Heart right ventricle (tissue), 16 donors: ENCODE measurements at regions of chr14 and their contacts with region 1.

Region 1: DNA sequence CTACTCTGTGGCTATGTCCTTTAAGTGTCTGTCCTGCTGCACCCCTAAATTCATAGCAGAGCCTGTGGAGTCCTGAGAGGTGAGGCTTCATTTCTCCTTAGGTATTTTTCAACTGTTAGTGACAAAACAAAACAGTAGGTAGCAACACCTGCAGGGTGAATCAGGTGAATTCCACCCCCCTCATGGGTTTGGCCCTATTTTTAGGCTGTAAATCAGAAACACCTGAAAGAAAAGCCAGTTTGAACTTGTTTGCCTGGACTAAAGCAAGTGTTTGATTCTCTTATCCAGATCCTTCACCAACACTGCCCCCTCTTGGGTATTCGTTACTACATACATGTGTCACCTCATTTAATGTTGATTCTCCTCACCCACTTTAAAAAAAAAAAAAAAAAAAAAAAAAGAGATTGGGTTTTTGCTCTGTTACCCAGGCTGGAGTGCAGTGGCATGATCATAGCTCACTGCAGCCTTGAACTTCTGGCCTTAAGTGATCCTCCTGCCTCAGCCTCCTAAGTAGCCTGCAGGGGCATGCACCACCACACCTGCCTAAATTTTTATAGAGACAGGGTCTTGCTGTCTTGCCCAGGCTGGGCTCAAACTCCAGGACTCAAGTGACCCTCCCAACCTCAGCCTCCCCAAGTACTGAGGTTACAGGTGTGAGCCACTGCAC is 10.3 kb downstream of the TBPL2 start:
- DNase-seq: peak in 1 of 2 donors; percentile 51
- ATAC-seq: peak in 7 of 8 donors; percentile 46 to 86 (median 75)
- H3K4me3 ChIP-seq: no peak overlapping the region
- H3K27ac ChIP-seq: no peak overlapping the region
- H3K4me1 ChIP-seq: peaks cover 0 to 5% (median 0%) of the 10 kb centered on the region in 9 donors
- H3K27me3 ChIP-seq: no peaks in the 10 kb centered on the region
- CTCF ChIP-seq: peak in 7 of 9 donors; percentile 39 to 54 (median 47)

Region 2: GRCh38 chr14:55212634-55213033 is 217.5 kb before region 1 on chr14:
- intact Hi-C with region 1: loop called in 8 of 10 experiments (anchors 2 to 10 kb)
- DNase-seq: no peak
- ATAC-seq: no peak
- H3K4me3 ChIP-seq: no peak overlapping the region
- H3K27ac ChIP-seq: no peak overlapping the region
- H3K4me1 ChIP-seq: peaks cover 0 to 6% (median 0%) of the 10 kb centered on the region in 9 donors
- H3K27me3 ChIP-seq: no peaks in the 10 kb centered on the region
- CTCF ChIP-seq: no peak

Region 3: GRCh38 chr14:55245657-55246268 is 184.4 kb before region 1 on chr14:
- intact Hi-C with region 1: loop called in 1 of 10 experiments (anchors 10 kb)
- DNase-seq: no peak
- ATAC-seq: no peak
- H3K4me3 ChIP-seq: no peak overlapping the region
- H3K27ac ChIP-seq: no peak overlapping the region
- H3K4me1 ChIP-seq: peaks cover 0 to 3% (median 0%) of the 10 kb centered on the region in 9 donors
- H3K27me3 ChIP-seq: peaks cover 0 to 12% (median 3%) of the 10 kb centered on the region in 7 donors
- CTCF ChIP-seq: peak; percentile 22 to 69 (median 56)

Region 4: GRCh38 chr14:55265197-55265596 is 165.0 kb before region 1 on chr14:
- intact Hi-C with region 1: loop called in 2 of 10 experiments (anchors 5 kb)
- DNase-seq: no peak
- ATAC-seq: no peak
- H3K4me3 ChIP-seq: no peak overlapping the region
- H3K27ac ChIP-seq: no peak overlapping the region
- H3K4me1 ChIP-seq: peaks cover 0 to 3% (median 0%) of the 10 kb centered on the region in 9 donors
- H3K27me3 ChIP-seq: no peaks in the 10 kb centered on the region
- CTCF ChIP-seq: no peak

Region 5: DNA sequence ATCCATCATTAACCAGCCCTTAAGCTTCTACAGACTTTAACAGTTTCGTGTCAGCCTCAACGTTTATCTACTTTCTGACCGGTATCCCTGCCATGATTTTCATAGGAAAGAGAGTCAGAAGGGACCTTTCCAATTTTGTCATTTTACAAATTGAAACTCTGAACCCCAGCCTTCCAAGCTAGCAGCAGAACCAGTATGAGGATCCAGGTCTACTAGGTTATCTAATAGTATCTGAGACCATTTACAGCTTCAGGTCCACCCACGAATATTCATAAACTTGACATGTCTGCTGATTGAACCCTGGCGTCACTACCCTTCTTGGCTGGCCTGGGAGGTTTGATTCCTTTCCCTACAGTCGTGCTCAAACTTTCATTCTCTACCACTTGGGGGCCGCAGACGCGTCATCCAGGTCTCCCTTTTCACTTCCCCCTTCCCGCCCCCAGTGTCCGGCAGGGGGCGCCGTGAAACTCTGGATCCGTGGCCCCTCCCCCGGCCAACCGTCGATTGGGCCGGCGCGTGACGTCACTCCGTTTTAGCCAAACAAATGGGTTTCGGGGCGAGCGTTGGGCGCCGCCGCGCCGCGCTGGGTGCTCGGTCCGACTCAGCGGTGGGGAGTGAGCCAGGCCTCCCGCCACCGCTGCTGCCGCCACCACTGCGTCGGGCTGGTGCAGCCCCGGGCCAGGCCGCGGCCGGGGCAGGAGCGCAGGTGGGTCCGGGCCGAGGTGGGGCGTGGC is 159.2 kb before region 1 on chr14 and contains the start of gene FBXO34:
- intact Hi-C with region 1: loop called in 3 of 10 experiments (anchors 1 to 5 kb)
- DNase-seq: peak; percentile 99 to 100
- ATAC-seq: peak; percentile 90 to 97 (median 94)
- H3K4me3 ChIP-seq: peak within 1 kb of the TSS; percentile 73 to 99 (median 96)
- H3K27ac ChIP-seq: peak within 1 kb of the TSS; percentile 76 to 97 (median 96)
- H3K4me1 ChIP-seq: peaks cover 0 to 39% (median 29%) of the 10 kb centered on the region in 9 donors
- H3K27me3 ChIP-seq: no peaks in the 10 kb centered on the region
- CTCF ChIP-seq: peak; percentile 99 to 100 (median 100)
- total RNA-seq, gene FBXO34: 16.9 to 26.2 (median 21.2) TPM

Region 6: DNA sequence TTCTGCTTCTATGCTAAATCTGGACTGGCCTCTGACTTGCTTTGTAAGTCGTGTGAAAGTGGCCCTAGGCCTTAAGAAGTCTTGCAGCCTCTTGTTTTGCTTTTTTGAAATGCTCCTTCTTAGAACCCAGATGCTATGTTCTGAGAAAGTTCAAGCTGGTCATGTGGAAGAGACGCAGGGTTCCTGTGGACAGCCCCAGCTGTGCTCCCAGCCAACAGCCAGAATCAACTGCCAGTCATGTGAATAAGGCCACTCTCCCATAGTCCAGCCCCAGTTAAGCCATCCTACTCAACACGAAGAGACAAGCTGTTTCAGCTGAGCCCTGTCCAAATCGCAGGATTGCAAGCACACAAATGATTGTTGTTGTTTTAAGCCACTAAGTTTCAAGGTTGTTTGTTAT is 47.5 kb after region 1 on chr14:
- intact Hi-C with region 1: no loop called
- DNase-seq: peak; percentile 21 to 50
- ATAC-seq: peak; percentile 72 to 96 (median 89)
- H3K4me3 ChIP-seq: no peak overlapping the region
- H3K27ac ChIP-seq: peak overlapping the region in 3 of 10 donors; percentile 44 to 66 (median 49)
- H3K4me1 ChIP-seq: peaks cover 0 to 15% (median 4%) of the 10 kb centered on the region in 9 donors
- H3K27me3 ChIP-seq: no peaks in the 10 kb centered on the region
- CTCF ChIP-seq: no peak

Region 7: DNA sequence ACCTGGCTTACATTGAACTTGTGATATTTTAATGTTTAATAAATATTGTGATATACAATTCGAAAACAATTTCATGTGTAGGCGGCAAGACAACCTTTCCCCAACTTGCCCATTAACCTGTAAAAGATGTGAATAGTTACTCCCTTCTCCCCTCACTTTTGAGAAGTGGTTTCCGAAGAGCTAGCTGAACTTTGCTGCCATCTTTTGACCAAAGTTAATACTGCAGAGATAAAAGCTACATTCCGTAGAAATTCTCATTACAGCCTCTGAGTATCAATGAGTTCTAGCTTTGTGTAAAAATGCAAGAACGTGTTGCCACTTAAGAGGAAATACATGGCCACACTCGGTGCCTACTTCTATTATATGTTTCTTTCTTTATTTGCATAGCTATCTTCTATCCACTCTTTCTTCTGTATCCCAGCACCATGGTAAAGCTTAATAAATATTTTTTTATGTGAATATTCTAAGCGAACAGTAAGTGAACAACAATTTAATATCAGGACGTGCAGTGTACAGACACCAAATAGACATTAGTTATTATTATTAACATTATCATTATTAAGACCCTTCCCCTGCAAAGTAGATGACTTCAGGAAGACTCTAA is 1044.4 kb after region 1 on chr14:
- intact Hi-C with region 1: loop called in 4 of 10 experiments (anchors 5 to 10 kb)
- DNase-seq: no peak
- ATAC-seq: peak in 2 of 8 donors; percentile 16 to 56
- H3K4me3 ChIP-seq: no peak overlapping the region
- H3K27ac ChIP-seq: no peak overlapping the region
- H3K4me1 ChIP-seq: no peaks in the 10 kb centered on the region
- H3K27me3 ChIP-seq: peaks cover 0 to 6% (median 0%) of the 10 kb centered on the region in 7 donors
- CTCF ChIP-seq: peak; percentile 71 to 92 (median 84)